ENCODE measurements at regions of chr7 and their contacts with region 1.

Region 1: DNA sequence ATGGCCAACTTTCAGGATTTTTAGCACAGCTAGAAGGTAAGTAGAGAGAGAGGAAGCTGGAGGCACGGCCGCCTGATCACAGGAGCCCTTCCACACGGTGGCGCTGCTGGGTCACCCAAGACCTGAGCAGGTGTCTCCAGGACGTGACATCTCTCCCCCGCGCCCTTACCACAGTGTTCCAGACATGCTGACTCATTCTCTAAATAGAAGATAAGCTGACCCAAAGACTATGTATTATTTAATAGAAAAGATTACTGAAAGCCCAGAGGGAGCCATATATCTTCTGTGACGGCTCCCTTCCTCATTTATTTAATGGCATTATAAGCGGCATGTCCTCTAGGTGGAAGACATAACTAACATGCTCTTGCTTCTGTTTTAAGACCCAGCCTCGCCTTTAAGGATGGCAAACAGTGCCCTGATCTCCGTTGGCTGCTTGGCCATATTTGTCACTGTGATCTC is 26.0 kb upstream of the MALSU1 start:
- DNase-seq: peak; percentile 89
- ATAC-seq: peak; percentile 98
- H3K4me3 ChIP-seq: peak overlapping the region; percentile 20 to 47 (median 37); a peak in 5 of 6 replicates
- H3K27ac ChIP-seq: peak overlapping the region; percentile 53
- H3K4me1 ChIP-seq: peaks cover 40% of the 10 kb centered on the region
- H3K27me3 ChIP-seq: no peaks in the 10 kb centered on the region
- CTCF ChIP-seq: peak; percentile 95
- EP300 ChIP-seq: peak in 1 of 2 experiments; percentile 41; a peak in 1 of 4 replicates
- POLR2A ChIP-seq: no peak
- RAD21 ChIP-seq: peak; percentile 90

Region 2: DNA sequence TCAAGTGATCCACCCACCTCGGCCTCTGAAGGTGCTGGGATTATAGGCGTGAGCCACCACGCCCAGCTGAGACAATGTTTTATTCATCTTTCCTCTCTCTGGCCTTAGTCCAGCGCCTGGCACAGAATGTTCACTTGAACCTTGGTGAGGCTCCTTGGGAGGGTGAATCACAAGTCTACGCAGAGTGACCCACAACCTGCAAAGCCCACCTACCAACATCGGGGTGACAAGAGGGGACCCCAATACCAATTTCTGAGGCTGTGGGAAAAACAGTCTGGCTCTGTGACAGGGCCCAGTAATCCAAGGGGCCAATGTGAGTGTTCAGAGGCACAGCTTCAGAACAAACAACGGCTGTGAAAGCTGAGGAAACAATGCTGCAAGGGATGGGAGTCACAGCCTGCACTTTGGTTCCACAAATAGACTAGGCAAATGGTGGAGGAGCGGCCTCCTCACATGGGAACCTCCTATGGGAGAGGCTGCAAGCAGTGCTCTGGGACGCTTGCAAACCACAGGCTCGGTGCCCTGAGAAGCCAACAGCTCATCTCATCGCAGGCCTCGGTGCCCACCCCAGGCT is 20.4 kb after region 1 on chr7:
- CTCF ChIA-PET with region 1: no interaction called
- POLR2A ChIA-PET with region 1: interaction called, 15 read pairs
- in situ Hi-C with region 1: no loop called
- intact Hi-C with region 1: loop called (anchors 1 kb)
- DNase-seq: peak; percentile 97
- ATAC-seq: peak; percentile 84
- H3K4me3 ChIP-seq: peak overlapping the region; percentile 31 to 70 (median 50)
- H3K27ac ChIP-seq: peak overlapping the region; percentile 100
- H3K4me1 ChIP-seq: peaks cover 85% of the 10 kb centered on the region
- H3K27me3 ChIP-seq: no peaks in the 10 kb centered on the region
- CTCF ChIP-seq: peak; percentile 11; the same call in 1 of the 2 replicates
- EP300 ChIP-seq: peak; percentile 72 to 91; a peak in 3 of 4 replicates
- POLR2A ChIP-seq: peak; percentile 81 to 84; a peak in 3 of 4 replicates
- RAD21 ChIP-seq: peak; percentile 42; the same call in 1 of the 2 replicates

Region 3: DNA sequence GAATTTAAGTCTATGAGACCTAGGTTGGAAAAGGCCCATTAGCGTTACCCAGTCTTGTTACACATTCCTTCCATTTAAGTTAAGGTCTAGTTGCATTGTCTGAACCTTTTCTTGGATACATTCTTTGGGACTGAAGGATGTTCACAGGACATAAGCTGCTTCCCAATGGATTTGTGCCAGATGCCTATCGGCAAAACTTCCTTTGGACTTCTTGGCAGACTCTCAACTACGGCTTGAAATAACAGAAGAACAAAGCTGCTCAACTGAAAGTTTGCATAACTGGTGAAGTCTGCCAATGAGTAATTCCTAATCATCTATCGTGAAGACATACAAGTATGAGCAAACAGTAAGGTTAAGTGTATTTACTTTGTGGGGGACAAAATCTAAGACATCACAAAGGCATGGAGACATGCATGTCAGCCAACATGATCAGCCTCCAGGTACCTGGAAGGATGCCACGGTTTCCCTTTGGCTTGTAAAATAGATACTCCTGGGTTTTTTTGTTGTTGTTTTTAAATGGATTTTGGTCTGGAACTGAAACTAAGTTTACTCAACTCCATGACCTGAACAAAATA is 61.4 kb after region 1 on chr7:
- CTCF ChIA-PET with region 1: no interaction called
- POLR2A ChIA-PET with region 1: no interaction called
- in situ Hi-C with region 1: no loop called
- intact Hi-C with region 1: loop called (anchors 2 kb)
- DNase-seq: peak; percentile 94
- ATAC-seq: peak; percentile 76
- H3K4me3 ChIP-seq: no peak overlapping the region
- H3K27ac ChIP-seq: peak overlapping the region; percentile 84
- H3K4me1 ChIP-seq: peaks cover 78% of the 10 kb centered on the region
- H3K27me3 ChIP-seq: no peaks in the 10 kb centered on the region
- CTCF ChIP-seq: no peak
- EP300 ChIP-seq: peak; percentile 31 to 98; a peak in 2 of 4 replicates
- POLR2A ChIP-seq: no peak
- RAD21 ChIP-seq: no peak

Region 4: DNA sequence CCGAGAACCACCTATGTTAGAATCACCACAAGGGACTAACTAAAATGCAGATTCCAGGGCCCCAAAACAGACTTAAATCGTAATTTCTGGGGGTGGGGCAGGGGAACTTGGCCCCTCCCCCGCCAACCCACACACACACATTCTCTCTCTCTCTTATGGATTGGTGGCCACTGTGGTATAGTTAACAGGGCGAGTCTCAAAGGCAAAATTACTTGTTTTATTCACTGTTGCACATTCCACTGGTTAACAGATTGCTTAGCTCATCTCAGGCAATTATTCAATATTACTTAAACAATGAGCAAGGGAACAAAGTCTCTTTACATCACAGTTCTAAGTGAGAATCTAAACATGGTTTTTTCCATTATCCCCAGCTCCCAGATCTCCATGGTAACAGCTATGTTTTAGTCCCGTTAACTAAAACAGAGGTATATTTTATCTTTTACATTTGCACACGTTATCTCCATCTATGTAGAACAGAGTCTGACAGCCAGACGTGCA is 158.6 kb after region 1 on chr7:
- CTCF ChIA-PET with region 1: interaction called, 8 read pairs
- POLR2A ChIA-PET with region 1: no interaction called
- in situ Hi-C with region 1: no loop called
- intact Hi-C with region 1: loop called (anchors 10 kb)
- DNase-seq: no peak
- ATAC-seq: no peak
- H3K4me3 ChIP-seq: no peak overlapping the region
- H3K27ac ChIP-seq: peak overlapping the region; percentile 17
- H3K4me1 ChIP-seq: peaks cover 28% of the 10 kb centered on the region
- H3K27me3 ChIP-seq: no peaks in the 10 kb centered on the region
- CTCF ChIP-seq: no peak
- EP300 ChIP-seq: no peak
- POLR2A ChIP-seq: no peak
- RAD21 ChIP-seq: no peak

Region 5: GRCh38 chr7:23531794-23532489 is 258.8 kb after region 1 on chr7 and contains the start of gene TRA2A:
- CTCF ChIA-PET with region 1: no interaction called
- POLR2A ChIA-PET with region 1: interaction called, 6 read pairs
- in situ Hi-C with region 1: loop called (anchors 10 kb)
- intact Hi-C with region 1: loop called (anchors 5 kb)
- DNase-seq: peak; percentile 90
- ATAC-seq: peak; percentile 95
- H3K4me3 ChIP-seq: peak within 1 kb of the TSS; percentile 73 to 98 (median 98)
- H3K27ac ChIP-seq: peak within 1 kb of the TSS; percentile 95
- H3K4me1 ChIP-seq: peaks cover 37% of the 10 kb centered on the region
- H3K27me3 ChIP-seq: no peaks in the 10 kb centered on the region; a peak in 1 of 5 replicates
- CTCF ChIP-seq: no peak; the same call in 1 of the 2 replicates
- EP300 ChIP-seq: no peak
- POLR2A ChIP-seq: peak; percentile 98 to 99
- RAD21 ChIP-seq: no peak; the same call in 1 of the 2 replicates
- total RNA-seq, gene TRA2A: 39.1 and 52.7 TPM in 2 replicates

Region 6: GRCh38 chr7:23712368-23713284 is 439.5 kb after region 1 on chr7:
- CTCF ChIA-PET with region 1: no interaction called
- POLR2A ChIA-PET with region 1: no interaction called
- in situ Hi-C with region 1: loop called (anchors 25 kb)
- intact Hi-C with region 1: no loop called
- DNase-seq: peak; percentile 51
- ATAC-seq: peak; percentile 26; the same call in 1 of the 3 replicates
- H3K4me3 ChIP-seq: no peak overlapping the region
- H3K27ac ChIP-seq: no peak overlapping the region
- H3K4me1 ChIP-seq: peaks cover 14% of the 10 kb centered on the region
- H3K27me3 ChIP-seq: peaks cover 0 to 4% of the 10 kb centered on the region in 2 experiments; a peak in 3 of 5 replicates
- CTCF ChIP-seq: peak; percentile 57
- EP300 ChIP-seq: no peak
- POLR2A ChIP-seq: no peak
- RAD21 ChIP-seq: peak; percentile 52; the same call in 1 of the 2 replicates